ENCODE measurements at regions of chr6 and their contacts with region 1.

Region 1: DNA sequence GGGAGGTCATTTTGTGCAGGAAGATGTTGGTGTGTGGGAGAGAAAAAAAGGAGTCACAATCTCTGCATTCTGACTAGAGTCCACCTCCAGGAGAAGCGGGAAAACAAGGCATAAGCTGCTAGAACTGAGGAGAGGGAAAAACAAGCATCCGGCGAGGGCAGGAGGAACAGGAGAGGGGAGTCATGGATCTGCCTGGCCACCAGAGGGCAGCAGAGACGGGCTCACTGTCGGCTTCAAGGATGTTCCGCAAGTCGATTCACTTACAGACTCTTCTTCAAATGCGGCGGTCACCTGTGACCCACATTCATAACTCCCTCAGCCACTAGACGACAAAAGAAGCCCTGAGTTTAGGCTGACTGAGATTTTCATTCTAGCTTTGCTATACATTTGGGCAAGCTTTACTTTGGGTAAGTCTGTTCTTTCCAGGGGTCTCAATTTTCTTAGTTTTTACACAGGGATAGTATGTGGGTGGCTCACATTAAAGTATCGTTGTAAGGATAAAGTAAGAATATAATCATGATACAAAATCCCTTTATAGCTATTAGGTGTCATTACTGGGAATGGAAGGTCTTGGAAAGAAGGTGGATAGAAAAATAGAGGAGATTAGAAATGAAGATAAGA is 6.6 kb upstream of the BTNL2 start:
- DNase-seq: peak; percentile 92
- H3K4me3 Mint-ChIP-seq: no peak overlapping the region
- H3K27ac Mint-ChIP-seq: no peak overlapping the region
- H3K4me1 Mint-ChIP-seq: peaks cover 2% of the 10 kb centered on the region
- H3K27me3 Mint-ChIP-seq: peaks cover 29% of the 10 kb centered on the region

Region 2: DNA sequence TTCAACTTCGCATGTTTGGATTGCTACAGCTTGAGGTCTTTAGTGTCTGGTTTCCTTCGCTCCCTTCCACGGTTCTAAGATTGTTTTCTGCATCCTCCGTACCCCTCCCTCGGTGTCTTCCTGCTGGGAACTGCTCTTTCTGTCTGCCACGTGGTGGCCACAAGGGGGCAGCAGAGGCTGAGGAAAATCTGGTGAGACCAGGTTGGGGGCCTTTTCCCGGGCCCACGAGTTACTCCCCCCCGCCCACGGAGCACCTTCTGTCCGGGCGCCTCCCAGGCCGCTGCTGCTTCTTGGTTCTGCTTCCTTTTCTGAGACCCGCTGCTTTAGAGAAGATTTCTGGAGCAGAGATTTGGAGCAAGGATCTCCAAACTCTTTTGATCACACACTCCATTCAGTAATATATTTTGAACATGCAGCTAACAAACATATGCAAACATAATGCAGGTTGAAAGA is 168.6 kb before region 1 on chr6:
- CTCF ChIA-PET with region 1: interaction called, 26 read pairs
- intact Hi-C with region 1: loop called (anchors 1 kb)
- DNase-seq: peak; percentile 76
- H3K4me3 Mint-ChIP-seq: peak overlapping the region; percentile 34
- H3K27ac Mint-ChIP-seq: no peak overlapping the region
- H3K4me1 Mint-ChIP-seq: peaks cover 28% of the 10 kb centered on the region
- H3K27me3 Mint-ChIP-seq: no peaks in the 10 kb centered on the region

Region 3: GRCh38 chr6:32432050-32432450 is 18.5 kb after region 1 on chr6:
- CTCF ChIA-PET with region 1: interaction called, 6 read pairs
- intact Hi-C with region 1: loop called (anchors 2 kb)
- DNase-seq: no peak
- H3K4me3 Mint-ChIP-seq: no peak overlapping the region
- H3K27ac Mint-ChIP-seq: no peak overlapping the region
- H3K4me1 Mint-ChIP-seq: no peaks in the 10 kb centered on the region
- H3K27me3 Mint-ChIP-seq: peaks cover 2% of the 10 kb centered on the region

Region 4: DNA sequence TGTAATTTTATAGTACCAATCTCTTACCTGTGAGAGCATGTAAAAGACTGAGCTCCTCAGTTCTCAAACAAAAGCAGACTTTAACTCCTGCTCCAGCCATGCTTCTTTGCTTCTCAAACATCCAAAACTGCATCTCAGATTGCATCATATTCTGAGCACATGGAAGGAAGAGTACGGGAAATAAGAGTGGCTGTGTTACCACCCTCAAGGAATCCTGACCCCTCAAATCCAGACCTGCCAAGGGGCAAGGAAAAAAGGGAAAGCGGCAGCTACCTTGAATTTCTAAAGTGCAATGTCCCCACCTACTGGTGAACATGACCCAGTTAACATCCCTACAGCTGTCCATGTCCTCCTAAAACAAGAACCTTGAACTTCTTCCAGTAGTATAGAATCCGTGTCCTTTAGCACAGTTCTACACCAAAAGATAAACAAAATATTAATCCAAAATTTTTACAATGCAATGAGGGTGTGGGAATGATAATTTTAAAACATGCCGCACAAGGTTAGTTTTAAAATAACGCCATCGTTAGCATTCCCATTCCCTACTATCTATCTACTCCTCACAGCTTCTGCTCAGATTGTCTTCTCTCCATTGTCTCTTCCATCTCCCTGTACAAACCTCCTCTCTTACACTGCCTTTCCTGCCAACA is 287.0 kb after region 1 on chr6:
- CTCF ChIA-PET with region 1: interaction called, 48 read pairs
- intact Hi-C with region 1: loop called (anchors 1 kb)
- DNase-seq: peak; percentile 30
- H3K4me3 Mint-ChIP-seq: no peak overlapping the region
- H3K27ac Mint-ChIP-seq: no peak overlapping the region
- H3K4me1 Mint-ChIP-seq: peaks cover 2% of the 10 kb centered on the region
- H3K27me3 Mint-ChIP-seq: peaks cover 24% of the 10 kb centered on the region

Region 5: DNA sequence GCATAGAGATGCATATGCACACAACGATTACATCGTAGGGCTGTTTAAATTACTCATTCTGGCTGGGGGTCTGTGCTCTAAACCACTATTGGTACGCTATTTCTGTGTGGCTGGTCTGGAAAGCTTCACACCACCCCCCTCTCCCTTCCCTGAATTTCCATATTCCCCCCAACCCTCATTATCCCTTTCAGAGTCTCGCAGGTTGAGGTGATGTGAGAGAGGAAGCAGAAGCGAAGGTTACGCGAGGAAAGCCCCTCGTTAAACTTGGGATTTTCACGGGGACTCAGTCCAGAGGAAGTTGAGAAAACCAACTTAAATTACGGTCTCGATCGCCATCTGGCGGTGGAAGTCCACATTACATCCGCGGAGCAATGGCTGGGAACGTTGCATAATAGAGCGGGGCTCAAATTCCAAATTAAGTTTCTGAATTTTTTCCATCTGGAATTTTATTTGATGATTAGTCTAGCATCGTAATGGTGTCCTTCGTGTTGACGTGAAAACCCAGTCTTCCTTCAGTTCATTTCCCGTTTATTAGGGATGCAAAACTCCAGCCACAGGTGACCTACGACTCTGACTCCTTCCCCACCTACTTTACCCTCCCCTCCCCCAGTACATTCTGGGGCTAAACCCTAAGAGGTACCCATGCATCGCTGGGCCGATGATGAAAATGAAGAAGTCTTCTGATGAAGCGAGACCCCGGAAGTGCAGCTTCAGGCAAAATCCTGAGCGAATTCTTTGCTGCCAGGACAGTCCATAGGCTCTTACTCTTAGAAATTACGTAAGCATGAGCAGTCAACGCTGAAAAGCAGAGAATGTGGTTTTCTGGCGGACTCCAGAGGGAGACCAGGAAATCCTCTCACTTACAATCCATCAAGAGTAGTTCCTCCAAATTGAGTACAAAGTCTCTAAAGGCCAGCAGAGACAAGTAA is 383.6 kb after region 1 on chr6:
- CTCF ChIA-PET with region 1: interaction called, 15 read pairs
- intact Hi-C with region 1: loop called (anchors 1 kb)
- DNase-seq: peak; percentile 91
- H3K4me3 Mint-ChIP-seq: peak overlapping the region; percentile 47
- H3K27ac Mint-ChIP-seq: no peak overlapping the region
- H3K4me1 Mint-ChIP-seq: peaks cover 22% of the 10 kb centered on the region
- H3K27me3 Mint-ChIP-seq: peaks cover 20% of the 10 kb centered on the region

Region 6: GRCh38 chr6:32894080-32895005 is 480.8 kb after region 1 on chr6:
- CTCF ChIA-PET with region 1: no interaction called
- intact Hi-C with region 1: no loop called
- DNase-seq: peak; percentile 97
- H3K4me3 Mint-ChIP-seq: peak overlapping the region; percentile 97
- H3K27ac Mint-ChIP-seq: peak overlapping the region; percentile 96
- H3K4me1 Mint-ChIP-seq: peaks cover 37% of the 10 kb centered on the region
- H3K27me3 Mint-ChIP-seq: no peaks in the 10 kb centered on the region